ENCODE measurements at regions of chr3 and their contacts with region 1.

Region 1: GRCh38 chr3:196179380-196180308 is 31.6 kb downstream of the ZDHHC19 start:
- DNase-seq: peak; percentile 74 to 95 (median 87)
- H3K4me3 ChIP-seq: peak overlapping the region; percentile 40
- H3K4me3 Mint-ChIP-seq: peak overlapping the region; percentile 17 to 92 (median 72)
- H3K27ac ChIP-seq: peak overlapping the region; percentile 75
- H3K27ac Mint-ChIP-seq: peak overlapping the region; percentile 89 to 99 (median 96)
- H3K4me1 ChIP-seq: peaks cover 49% of the 10 kb centered on the region
- H3K4me1 Mint-ChIP-seq: peaks cover 44 to 61% (median 61%) of the 10 kb centered on the region in 3 donors
- H3K27me3 ChIP-seq: no peaks in the 10 kb centered on the region
- H3K27me3 Mint-ChIP-seq: no peaks in the 10 kb centered on the region

Region 2: DNA sequence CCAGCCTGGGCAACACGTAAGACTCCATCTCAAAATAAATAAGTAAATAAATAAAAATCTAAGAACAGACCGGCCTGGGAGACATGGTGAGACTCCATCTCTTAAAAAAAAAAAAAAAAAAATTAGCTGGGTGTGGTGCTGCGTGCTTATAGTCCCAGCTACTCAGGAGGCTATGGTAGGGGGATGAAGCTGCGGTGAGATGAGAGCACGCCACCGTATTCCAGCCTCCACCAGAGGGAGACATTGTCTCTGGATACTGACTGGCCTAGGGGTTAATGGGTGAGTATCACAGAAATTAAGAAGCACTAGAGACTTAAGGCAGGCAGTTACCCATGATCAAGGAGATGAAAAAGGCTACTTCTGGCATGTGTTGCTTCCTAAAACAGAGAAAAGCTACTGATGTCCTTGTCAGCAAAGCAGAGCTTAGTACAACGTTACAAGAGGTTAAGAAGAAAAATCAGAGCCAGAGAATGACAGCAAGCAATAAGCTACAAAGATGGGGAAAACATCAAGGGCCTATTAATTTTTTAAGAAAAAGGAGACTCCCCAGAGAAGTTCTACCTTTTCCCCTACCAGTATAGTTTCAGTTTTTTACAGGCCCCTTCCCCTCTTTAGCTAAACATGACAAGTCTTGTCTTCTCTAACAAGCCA is 106.3 kb before region 1 on chr3:
- CTCF ChIA-PET with region 1: interaction called, 62 read pairs
- POLR2A ChIA-PET with region 1: interaction called, 6 read pairs
- DNase-seq: peak; percentile 41 to 81 (median 66)
- H3K4me3 ChIP-seq: no peak overlapping the region
- H3K4me3 Mint-ChIP-seq: no peak overlapping the region
- H3K27ac ChIP-seq: no peak overlapping the region
- H3K27ac Mint-ChIP-seq: peak overlapping the region; percentile 9 to 81 (median 43)
- H3K4me1 ChIP-seq: peaks cover 13% of the 10 kb centered on the region
- H3K4me1 Mint-ChIP-seq: peaks cover 17 to 42% (median 29%) of the 10 kb centered on the region in 3 donors
- H3K27me3 ChIP-seq: no peaks in the 10 kb centered on the region
- H3K27me3 Mint-ChIP-seq: no peaks in the 10 kb centered on the region

Region 3: DNA sequence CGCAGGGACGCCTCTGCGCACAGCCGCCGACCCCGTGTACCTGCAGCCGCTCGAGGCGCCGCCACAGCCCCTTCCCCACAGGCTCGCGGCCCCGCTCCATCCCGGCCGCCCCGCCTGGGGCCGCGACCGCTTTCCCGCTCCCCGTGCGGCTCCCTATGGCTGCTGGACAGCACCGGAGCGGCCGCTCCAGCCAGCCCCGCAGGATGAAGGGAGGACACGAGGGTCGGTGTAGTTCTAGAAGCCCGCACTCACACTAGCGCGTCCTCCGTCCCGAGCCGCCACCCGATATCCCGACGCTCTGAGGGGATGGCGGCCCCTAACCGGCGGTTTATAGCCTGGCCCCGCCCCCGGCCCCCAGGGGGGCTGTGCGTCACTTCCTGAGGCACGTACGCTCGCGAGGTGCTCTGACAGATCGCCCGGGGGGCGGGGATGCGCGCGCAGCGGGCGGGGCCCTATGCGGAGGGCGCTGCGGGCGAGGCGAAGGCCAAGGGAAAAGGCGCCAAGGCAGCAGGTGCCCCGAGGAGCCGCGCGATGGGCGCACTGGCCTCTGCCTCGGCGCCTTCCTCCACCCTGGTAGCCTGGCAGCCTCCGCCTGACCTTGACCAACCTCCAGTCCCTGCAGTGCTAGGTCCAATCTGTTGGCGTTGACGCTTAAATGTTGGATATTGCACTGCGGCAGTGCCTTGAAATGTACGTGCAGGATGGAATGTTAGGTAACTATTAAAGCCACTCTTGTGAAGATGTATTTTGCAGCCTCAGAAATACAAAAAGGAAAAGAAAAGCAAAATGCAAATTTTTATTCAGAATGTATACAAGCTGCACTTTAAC is 97.6 kb before region 1 on chr3 and contains the start of gene TFRC:
- CTCF ChIA-PET with region 1: interaction called, 62 read pairs
- POLR2A ChIA-PET with region 1: interaction called, 13 read pairs
- DNase-seq: peak; percentile 93 to 96 (median 95)
- H3K4me3 ChIP-seq: peak within 1 kb of the TSS; percentile 62
- H3K4me3 Mint-ChIP-seq: peak within 1 kb of the TSS; percentile 93 to 98 (median 96)
- H3K27ac ChIP-seq: peak within 1 kb of the TSS; percentile 99
- H3K27ac Mint-ChIP-seq: peak within 1 kb of the TSS; percentile 89 to 98 (median 96)
- H3K4me1 ChIP-seq: peaks cover 34% of the 10 kb centered on the region
- H3K4me1 Mint-ChIP-seq: peaks cover 35 to 46% (median 37%) of the 10 kb centered on the region in 3 donors
- H3K27me3 ChIP-seq: no peaks in the 10 kb centered on the region
- H3K27me3 Mint-ChIP-seq: peaks cover 0 to 1% of the 10 kb centered on the region in 2 donors
- total RNA-seq, gene TFRC: 669 to 687 TPM

Region 4: DNA sequence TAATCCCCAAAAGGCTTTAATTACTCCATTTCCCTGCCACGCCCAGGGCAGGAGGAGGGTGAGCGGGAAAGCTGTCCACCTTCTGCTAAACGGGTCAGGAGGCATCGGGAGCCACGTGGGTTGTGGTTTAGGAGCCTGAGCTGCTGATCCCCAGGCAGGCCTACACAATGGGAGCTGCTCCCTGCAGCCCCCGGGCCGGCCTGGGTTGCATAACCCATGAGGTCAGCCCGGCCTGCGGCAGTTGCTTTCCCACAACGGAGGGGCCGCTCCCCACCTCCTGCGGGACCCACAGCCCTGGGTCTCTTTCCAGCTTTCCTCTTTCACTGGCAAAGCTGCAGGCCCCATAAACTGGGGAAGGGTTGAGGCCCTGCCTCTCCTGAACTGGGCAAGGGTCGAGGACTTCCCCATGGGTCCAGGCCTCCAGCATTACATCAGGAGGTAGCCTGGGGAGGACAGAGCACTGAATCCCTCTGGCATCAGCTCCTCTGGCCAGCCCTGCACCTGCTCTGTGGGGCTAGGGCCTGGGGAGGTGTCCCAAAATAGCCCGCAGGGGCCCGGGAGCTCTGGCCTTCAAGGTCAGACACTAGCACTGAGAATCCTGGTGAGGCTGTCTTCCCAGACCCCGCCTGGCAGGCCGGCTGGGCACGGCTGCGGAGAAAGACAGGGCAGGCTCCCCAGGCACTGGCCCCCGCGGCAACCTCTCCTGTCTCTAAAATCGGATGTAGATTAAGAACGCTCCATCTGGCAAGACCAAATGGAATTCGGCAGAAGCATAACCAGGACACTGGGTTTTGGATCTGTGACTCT is 15.8 kb before region 1 on chr3:
- CTCF ChIA-PET with region 1: no interaction called
- POLR2A ChIA-PET with region 1: no interaction called
- DNase-seq: no peak
- H3K4me3 ChIP-seq: no peak overlapping the region
- H3K4me3 Mint-ChIP-seq: no peak overlapping the region
- H3K27ac ChIP-seq: no peak overlapping the region
- H3K27ac Mint-ChIP-seq: no peak overlapping the region
- H3K4me1 ChIP-seq: no peaks in the 10 kb centered on the region
- H3K4me1 Mint-ChIP-seq: peaks cover 8 to 11% (median 10%) of the 10 kb centered on the region in 3 donors
- H3K27me3 ChIP-seq: no peaks in the 10 kb centered on the region
- H3K27me3 Mint-ChIP-seq: peaks cover 0 to 2% of the 10 kb centered on the region in 2 donors

Region 5: DNA sequence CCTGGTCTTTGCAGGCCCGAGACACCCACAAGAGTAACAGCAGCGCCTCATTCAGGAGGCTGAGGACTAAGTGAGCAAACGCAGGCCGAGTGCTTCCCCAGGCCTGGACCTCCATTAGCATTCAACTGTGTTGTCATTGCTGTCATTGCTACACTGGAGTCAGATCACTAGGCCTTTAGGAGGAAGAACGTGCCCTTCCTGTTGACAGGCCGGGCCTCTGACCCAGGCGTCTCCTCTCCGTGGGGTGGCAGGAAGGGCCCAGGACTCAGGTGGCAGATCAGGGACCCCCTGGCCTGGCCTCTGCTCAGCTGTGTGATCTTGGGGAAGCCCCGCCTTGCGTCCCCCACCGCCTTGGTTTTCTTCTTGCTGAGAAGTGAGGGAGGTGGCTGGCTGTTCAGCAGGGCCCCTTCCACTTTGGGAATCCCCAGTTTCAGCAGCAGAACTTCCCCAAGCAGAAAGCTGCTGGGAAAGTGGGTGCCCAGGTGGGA is 12.4 kb after region 1 on chr3:
- CTCF ChIA-PET with region 1: interaction called, 16 read pairs
- POLR2A ChIA-PET with region 1: interaction called, 18 read pairs
- DNase-seq: peak; percentile 22 to 74 (median 43)
- H3K4me3 ChIP-seq: no peak overlapping the region
- H3K4me3 Mint-ChIP-seq: peak overlapping the region in 5 of 7 donors; percentile 55 to 73 (median 71)
- H3K27ac ChIP-seq: peak overlapping the region; percentile 68
- H3K27ac Mint-ChIP-seq: peak overlapping the region; percentile 83 to 98 (median 92)
- H3K4me1 ChIP-seq: peaks cover 27% of the 10 kb centered on the region
- H3K4me1 Mint-ChIP-seq: peaks cover 18 to 47% (median 39%) of the 10 kb centered on the region in 3 donors
- H3K27me3 ChIP-seq: no peaks in the 10 kb centered on the region
- H3K27me3 Mint-ChIP-seq: peaks cover 0 to 2% of the 10 kb centered on the region in 2 donors

Region 6: GRCh38 chr3:196198771-196199753 is 19.4 kb after region 1 on chr3:
- CTCF ChIA-PET with region 1: interaction called, 16 read pairs
- POLR2A ChIA-PET with region 1: interaction called, 7 read pairs
- DNase-seq: no peak
- H3K4me3 ChIP-seq: no peak overlapping the region
- H3K4me3 Mint-ChIP-seq: no peak overlapping the region
- H3K27ac ChIP-seq: no peak overlapping the region
- H3K27ac Mint-ChIP-seq: peak overlapping the region in 2 of 8 donors; percentile 5 to 32
- H3K4me1 ChIP-seq: peaks cover 11% of the 10 kb centered on the region
- H3K4me1 Mint-ChIP-seq: peaks cover 0 to 17% (median 16%) of the 10 kb centered on the region in 3 donors
- H3K27me3 ChIP-seq: no peaks in the 10 kb centered on the region
- H3K27me3 Mint-ChIP-seq: peaks cover 1 to 11% of the 10 kb centered on the region in 2 donors

Region 7: DNA sequence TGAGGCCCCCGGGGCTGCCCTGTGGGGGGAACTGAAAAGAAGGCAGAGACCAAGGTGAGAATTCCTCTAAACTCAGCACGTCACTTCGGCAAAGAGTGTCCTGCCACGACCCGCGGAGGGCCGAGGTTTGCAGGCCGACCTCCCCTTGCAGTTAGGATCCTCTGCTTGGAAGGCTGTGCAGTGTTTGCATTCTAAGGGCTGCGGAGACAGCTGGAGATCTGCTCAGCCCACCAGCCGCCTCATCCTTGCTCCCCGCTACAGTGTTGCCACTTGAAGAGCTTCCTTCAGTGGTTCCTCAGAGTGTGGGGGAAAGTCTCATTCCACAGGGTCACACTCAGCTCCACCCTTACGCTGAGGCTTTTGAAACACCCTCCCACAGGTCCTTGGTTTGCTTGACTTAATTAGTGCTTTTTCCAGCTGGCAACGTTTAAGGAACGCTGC is 47.5 kb after region 1 on chr3:
- CTCF ChIA-PET with region 1: no interaction called
- POLR2A ChIA-PET with region 1: interaction called, 12 read pairs
- DNase-seq: no peak
- H3K4me3 ChIP-seq: no peak overlapping the region
- H3K4me3 Mint-ChIP-seq: no peak overlapping the region
- H3K27ac ChIP-seq: no peak overlapping the region
- H3K27ac Mint-ChIP-seq: no peak overlapping the region
- H3K4me1 ChIP-seq: no peaks in the 10 kb centered on the region
- H3K4me1 Mint-ChIP-seq: no peaks in the 10 kb centered on the region
- H3K27me3 ChIP-seq: no peaks in the 10 kb centered on the region
- H3K27me3 Mint-ChIP-seq: peaks cover 7 to 11% of the 10 kb centered on the region in 2 donors